ENCODE measurements at regions of chr10 and their contacts with region 1.

Region 1: DNA sequence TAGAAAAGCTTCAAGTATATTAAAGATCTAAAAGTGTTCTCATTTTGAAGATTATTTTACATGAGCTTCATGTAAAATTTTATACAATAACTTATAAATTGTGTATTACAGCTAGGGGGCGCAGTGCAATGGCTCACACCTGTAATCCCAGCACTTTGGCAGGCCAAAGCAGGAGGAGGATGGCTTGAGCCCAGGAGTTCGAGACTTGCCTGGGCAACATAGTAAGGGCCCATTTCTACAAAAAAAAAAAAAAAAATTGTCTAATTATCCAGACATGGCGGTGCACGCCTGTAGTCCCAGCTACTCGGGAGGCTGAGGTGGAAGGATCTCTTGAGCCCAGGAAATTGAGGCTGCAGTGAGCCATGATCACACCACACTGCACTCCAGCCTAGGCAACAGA is 16.6 kb downstream of the ACBD5 start:
- DNase-seq: no peak
- H3K4me3 ChIP-seq: no peak overlapping the region
- H3K27ac ChIP-seq: no peak overlapping the region
- H3K27me3 ChIP-seq: no peaks in the 10 kb centered on the region
- CTCF ChIP-seq: peak; percentile 58

Region 2: DNA sequence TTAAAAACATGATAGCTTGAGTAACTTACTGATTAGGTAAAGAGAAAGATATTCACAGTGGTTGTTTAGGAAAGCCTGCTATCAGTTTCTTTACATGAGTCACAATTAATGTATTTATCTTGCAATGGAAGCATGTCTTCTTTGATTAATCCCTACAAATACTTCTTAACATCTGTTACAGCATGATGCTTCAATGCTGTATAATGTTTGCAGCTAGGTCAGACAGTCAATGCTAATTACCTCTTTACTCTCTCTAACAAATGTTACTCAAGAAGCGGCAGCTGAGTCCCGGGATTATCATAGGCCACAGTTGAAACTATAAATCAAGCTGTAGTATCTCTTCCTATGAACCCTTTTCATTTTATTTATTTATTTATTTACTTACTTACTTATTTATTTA is 16.6 kb before region 1 on chr10:
- CTCF ChIA-PET with region 1: interaction called, 30 read pairs
- POLR2A ChIA-PET with region 1: no interaction called
- DNase-seq: peak; percentile 15
- H3K4me3 ChIP-seq: no peak overlapping the region
- H3K27ac ChIP-seq: no peak overlapping the region
- H3K27me3 ChIP-seq: no peaks in the 10 kb centered on the region
- CTCF ChIP-seq: no peak

Region 3: GRCh38 chr10:27235706-27236105 is 11.7 kb after region 1 on chr10:
- CTCF ChIA-PET with region 1: interaction called, 36 read pairs
- POLR2A ChIA-PET with region 1: no interaction called
- DNase-seq: no peak
- H3K4me3 ChIP-seq: no peak overlapping the region
- H3K27ac ChIP-seq: no peak overlapping the region
- H3K27me3 ChIP-seq: no peaks in the 10 kb centered on the region
- CTCF ChIP-seq: no peak

Region 4: DNA sequence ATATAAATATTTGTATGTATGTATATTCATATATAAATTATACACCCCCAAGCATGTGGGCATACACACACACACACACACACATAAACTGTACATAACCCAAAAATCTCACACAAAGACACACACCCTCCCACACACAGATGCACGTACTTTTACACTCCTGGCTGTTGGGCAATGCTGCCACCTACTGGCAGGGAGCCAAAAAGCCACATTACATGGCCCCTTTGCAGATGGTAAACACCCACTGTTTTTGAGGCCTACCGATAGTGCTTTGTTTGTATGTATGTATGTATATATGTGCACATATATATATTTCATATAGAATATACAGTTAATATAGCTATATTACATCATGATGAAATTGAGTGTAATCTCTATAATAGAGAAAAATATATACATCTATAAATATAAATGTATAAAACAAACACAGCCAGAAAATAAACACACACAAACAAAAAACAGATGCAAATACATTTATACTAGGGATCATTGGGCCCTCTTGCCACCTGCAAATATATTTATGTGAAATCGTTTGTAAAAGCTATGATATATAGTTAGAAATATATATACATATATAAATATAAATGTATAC is 136.7 kb after region 1 on chr10:
- CTCF ChIA-PET with region 1: interaction called, 21 read pairs
- POLR2A ChIA-PET with region 1: no interaction called
- DNase-seq: peak; percentile 29
- H3K4me3 ChIP-seq: no peak overlapping the region
- H3K27ac ChIP-seq: no peak overlapping the region
- H3K27me3 ChIP-seq: no peaks in the 10 kb centered on the region
- CTCF ChIP-seq: peak; percentile 82

Region 5: DNA sequence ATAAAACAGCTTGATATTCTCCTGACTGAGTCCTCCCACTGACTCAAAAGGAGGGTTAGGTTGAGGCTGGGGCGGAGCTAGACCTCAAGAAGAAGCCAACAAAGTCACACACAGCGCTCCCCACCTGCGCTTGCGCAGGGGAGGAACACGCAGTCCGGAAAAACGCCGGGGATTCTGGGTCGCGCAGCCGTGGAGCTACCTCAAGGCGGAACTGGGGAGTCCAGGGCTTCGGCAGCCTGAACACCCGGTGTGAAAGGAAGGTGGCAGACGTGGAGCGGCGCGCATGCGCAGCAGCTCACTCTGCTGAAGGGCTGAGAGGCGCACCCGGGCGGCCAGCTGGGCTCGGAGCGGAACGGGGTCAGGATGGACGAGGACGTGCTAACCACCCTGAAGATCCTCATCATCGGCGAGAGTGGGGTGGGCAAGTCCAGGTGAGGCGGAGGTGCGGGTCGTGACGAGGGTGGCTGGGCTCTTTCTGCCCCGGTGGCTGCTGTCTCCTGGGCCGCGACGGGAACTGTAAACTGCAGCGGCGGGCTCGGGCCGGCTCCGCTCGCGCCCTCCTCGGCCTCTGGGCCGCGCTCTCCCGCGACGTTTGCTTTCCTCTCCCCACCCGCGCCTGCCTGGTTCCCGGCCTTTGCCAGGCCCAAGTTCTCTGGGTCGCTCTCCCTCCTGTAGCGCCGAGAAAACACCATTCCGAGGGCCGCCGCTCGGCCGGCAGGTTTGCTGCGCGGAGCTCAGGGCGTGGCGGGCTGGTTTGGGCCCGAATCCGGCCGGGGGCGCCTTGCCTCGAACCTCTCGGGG is 280.2 kb after region 1 on chr10 and contains the start of gene RAB18:
- CTCF ChIA-PET with region 1: no interaction called
- POLR2A ChIA-PET with region 1: no interaction called
- DNase-seq: peak; percentile 99
- H3K4me3 ChIP-seq: peak within 1 kb of the TSS; percentile 96
- H3K27ac ChIP-seq: peak within 1 kb of the TSS; percentile 88
- H3K27me3 ChIP-seq: peaks cover 7% of the 10 kb centered on the region
- CTCF ChIP-seq: no peak
- polyA plus RNA-seq, gene RAB18: 64.2 and 93.5 TPM in 2 replicates